AG04450 (cell line): ENCODE measurements at regions of chr3 and their contacts with region 1.

Region 1: GRCh38 chr3:129160891-129161859 is at the start of gene ISY1:
- DNase-seq: peak; percentile 91
- H3K4me3 ChIP-seq: peak within 1 kb of the TSS; percentile 90
- H3K27ac ChIP-seq: peak within 1 kb of the TSS; percentile 100
- H3K27me3 ChIP-seq: no peaks in the 10 kb centered on the region
- CTCF ChIP-seq: peak; percentile 85
- polyA plus RNA-seq, gene ISY1: 29.7 and 34.3 TPM in 2 replicates

Region 2: DNA sequence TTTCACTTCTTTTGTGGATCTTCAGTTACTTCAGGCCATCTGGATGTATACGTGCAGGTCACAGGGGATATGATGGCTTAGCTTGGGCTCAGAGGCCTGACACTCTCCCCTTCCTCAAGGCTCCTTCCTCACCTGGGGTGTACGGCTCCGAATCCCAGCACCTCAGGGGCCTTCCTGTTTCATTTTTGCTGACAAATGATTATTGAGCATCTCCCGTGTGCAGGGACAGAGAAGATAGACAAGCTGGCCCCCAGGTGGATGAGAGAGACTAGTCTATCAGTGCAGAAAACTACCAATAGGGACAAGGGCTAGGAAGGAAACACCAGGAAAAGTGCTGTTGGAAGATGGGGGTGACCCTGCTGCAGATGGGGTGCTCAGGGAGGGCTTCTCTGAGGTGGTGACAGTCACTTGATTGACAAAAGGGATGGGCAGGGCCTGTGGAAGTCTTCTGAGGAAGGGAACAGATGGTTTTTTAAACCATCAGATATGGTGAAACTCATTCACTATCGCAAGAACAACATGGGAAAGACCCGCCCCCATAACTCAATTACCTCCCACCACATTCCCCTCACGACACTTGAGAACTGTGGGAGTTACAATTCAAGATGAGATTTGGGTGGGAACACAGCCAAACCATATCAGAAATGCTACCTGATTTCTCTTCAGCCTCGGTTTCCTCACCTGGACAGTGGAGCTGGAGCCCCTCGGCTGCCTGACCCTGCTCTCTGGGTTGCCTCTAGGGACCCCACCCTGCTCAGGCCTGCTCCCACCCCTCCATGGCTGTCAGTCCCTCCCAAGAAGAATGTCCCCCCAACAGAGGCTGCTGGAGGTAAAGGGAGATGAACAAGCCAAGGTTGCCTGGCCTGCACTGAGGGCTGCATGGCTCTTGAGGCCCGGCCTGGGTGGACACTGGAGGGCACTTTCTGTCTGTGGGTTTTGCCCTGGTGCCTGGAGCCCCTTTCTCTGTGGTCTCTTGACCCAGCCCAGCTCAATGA is 319.0 kb before region 1 on chr3:
- CTCF ChIA-PET with region 1: no interaction called
- POLR2A ChIA-PET with region 1: no interaction called
- DNase-seq: no peak
- H3K4me3 ChIP-seq: no peak overlapping the region
- H3K27ac ChIP-seq: no peak overlapping the region
- H3K27me3 ChIP-seq: peaks cover 3% of the 10 kb centered on the region
- CTCF ChIP-seq: no peak

Region 3: GRCh38 chr3:129173206-129173605 is 12.0 kb after region 1 on chr3:
- CTCF ChIA-PET with region 1: interaction called, 19 read pairs
- POLR2A ChIA-PET with region 1: no interaction called
- DNase-seq: no peak
- H3K4me3 ChIP-seq: no peak overlapping the region
- H3K27ac ChIP-seq: no peak overlapping the region
- H3K27me3 ChIP-seq: no peaks in the 10 kb centered on the region
- CTCF ChIP-seq: no peak

Region 4: GRCh38 chr3:129183569-129184395 is 22.6 kb after region 1 on chr3 and contains the start of gene CNBP:
- CTCF ChIA-PET with region 1: interaction called, 19 read pairs
- POLR2A ChIA-PET with region 1: interaction called, 10 read pairs
- DNase-seq: peak; percentile 82
- H3K4me3 ChIP-seq: peak within 1 kb of the TSS; percentile 96
- H3K27ac ChIP-seq: peak within 1 kb of the TSS; percentile 81
- H3K27me3 ChIP-seq: no peaks in the 10 kb centered on the region
- CTCF ChIP-seq: no peak
- polyA plus RNA-seq, gene CNBP: 265 and 305 TPM in 2 replicates

Region 5: DNA sequence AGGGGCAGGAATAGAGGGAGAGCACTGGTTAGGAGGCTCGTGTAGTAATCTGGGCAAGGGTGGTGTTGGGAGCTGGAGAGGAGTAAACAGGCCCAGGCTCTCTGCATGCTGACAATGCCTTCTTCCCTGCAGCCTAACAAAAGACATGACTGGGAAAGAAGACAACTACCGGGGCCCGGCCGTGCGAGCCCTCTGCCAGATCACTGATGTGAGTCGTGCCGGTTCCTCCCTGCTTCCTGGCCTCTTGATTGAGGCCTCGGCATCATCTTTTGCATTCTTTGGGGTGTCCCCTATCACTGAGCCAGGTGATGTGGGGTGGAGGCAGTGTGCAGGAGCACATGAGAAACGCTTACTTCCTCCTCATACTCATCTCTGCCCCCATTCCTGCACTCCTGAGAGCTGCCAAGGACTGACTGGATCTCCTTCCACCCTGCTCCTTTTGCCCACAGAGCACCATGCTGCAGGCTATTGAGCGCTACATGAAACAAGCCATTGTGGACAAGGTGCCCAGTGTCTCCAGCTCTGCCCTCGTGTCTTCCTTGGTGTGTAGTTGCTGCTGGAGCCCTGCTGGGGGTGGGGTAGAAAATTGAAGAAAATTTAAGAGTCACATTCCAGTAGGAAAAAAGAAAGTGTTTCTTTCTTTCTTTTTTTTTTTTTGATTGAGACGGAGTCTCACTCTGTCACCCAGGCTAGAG is 93.5 kb after region 1 on chr3:
- CTCF ChIA-PET with region 1: interaction called, 10 read pairs
- POLR2A ChIA-PET with region 1: interaction called, 23 read pairs
- DNase-seq: no peak
- H3K4me3 ChIP-seq: no peak overlapping the region
- H3K27ac ChIP-seq: no peak overlapping the region
- H3K27me3 ChIP-seq: no peaks in the 10 kb centered on the region
- CTCF ChIP-seq: no peak